Activated T-helper 1 cell treated with anti-CD3 and anti-CD28 coated beads, Interleukin-12 subunit alpha, Interleukin-12 subunit beta, Interleukin-2, Interleukin-4 antibody, amounts not matched to agents 30 ng/mL and 10 ng/mL and 1 ng/mL, durations not matched to agents 14 hours and 24 hours and 36 hours (primary cell): ENCODE measurements at regions of chr9 and their contacts with region 1.

Region 1: GRCh38 chr9:97728256-97728655 is 31.1 kb upstream of the XPA start:
- DNase-seq: no peak
- H3K4me3 Mint-ChIP-seq: no peak overlapping the region
- H3K27ac Mint-ChIP-seq: no peak overlapping the region
- H3K4me1 Mint-ChIP-seq: no peaks in the 10 kb centered on the region
- H3K27me3 Mint-ChIP-seq: peaks cover 31% of the 10 kb centered on the region

Region 2: DNA sequence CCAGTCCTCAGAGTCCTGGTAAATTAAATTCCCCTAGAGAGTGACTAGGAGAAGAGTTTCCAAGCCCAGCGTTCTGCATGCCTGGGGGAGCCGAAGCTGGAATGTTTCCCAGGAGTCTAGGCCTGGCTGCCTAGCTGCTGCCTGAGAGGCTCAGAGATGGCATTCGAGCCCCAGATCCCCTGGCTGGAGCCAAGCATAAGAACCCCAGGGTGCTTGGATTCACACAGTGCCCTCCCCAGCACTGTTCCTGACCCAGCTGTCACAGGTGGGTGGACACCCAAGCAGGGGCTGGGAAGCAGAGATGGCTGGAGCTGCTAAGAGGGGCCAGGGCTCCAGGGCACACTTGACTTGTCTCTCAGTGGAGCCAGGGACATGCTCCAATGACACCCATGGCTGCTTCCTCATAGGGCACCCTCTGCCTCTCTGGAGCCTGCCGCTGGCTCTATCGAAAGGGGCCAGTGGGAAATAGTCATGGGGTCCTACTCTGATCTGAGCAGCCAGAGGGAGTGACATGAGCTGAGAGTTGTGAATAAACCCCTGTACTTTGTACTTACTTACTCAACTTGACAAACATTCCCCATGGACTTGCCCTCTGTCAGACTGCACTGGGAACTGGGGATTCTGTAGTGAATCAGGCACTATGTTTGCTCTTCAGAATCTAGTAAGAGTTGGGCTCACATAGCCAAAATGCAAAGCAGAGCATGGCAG is 31.5 kb after region 1 on chr9:
- intact Hi-C with region 1: loop called (anchors 5 kb)
- DNase-seq: no peak
- H3K4me3 Mint-ChIP-seq: no peak overlapping the region
- H3K27ac Mint-ChIP-seq: no peak overlapping the region
- H3K4me1 Mint-ChIP-seq: no peaks in the 10 kb centered on the region
- H3K27me3 Mint-ChIP-seq: peaks cover 14% of the 10 kb centered on the region